Heart right ventricle (tissue), 16 donors: ENCODE measurements at regions of chr22 and their contacts with region 1.

Region 1: DNA sequence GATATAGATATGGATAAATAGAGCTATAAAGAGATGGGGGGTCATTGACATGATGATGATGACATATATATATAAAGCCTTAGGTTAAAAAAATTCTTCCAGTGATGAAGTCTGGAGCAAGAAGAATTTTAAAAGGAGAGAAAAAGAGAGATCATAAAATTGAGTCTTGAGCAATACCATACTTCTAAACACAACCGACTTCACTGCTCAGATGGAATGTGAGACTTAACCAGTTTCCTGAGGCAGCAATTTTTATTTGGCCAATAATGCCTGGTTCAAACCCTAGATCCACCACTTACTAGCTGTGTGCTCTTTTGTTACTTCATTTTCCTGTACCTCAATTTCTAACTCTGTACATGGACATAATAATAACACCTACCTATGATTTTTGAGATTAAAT is 229.5 kb downstream of the TTC28 start:
- DNase-seq: no peak
- ATAC-seq: no peak
- H3K4me3 ChIP-seq: no peak overlapping the region
- H3K27ac ChIP-seq: no peak overlapping the region
- H3K4me1 ChIP-seq: no peaks in the 10 kb centered on the region
- H3K27me3 ChIP-seq: no peaks in the 10 kb centered on the region
- CTCF ChIP-seq: no peak

Region 2: GRCh38 chr22:28582806-28583205 is 132.7 kb after region 1 on chr22:
- intact Hi-C with region 1: loop called in 2 of 10 experiments (anchors 10 kb)
- DNase-seq: no peak
- ATAC-seq: no peak
- H3K4me3 ChIP-seq: no peak overlapping the region
- H3K27ac ChIP-seq: no peak overlapping the region
- H3K4me1 ChIP-seq: peaks cover 0 to 14% (median 0%) of the 10 kb centered on the region in 9 donors
- H3K27me3 ChIP-seq: no peaks in the 10 kb centered on the region
- CTCF ChIP-seq: no peak

Region 3: DNA sequence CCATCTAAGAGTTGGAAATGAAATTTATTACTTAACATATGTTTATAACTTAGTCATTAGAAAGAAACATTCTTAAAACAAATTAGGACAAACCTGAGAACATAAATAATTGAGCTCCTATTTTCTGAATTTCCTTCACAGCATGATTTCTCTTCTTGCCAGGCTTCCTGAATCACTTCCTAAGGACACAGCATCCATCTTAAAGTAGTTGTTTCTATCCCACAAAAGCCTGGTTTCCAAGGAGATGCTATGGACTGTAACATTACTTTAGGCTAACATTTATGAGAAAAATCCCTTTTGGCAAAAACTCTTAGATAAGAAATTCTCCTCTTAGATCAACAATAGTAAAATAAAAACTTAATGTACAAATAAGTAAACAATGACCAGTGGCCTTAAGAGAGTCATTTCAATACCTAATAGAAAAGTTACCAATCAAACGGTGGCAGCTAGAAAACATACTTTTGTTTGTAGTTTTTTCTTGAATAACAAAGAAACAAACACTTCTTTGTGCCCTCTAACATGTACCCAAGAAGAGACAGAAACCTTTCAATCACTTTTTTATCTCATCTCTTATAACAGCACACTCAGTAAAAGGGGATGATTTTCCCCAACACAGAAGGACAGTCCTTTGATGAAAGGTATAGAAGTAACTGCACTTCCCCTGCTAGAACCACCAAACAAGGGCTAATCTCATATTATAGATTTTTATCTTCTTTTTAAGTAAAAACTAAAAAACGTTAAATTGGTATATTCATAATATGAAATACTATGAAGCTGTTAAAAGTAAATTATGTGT is 155.1 kb after region 1 on chr22:
- intact Hi-C with region 1: no loop called
- DNase-seq: no peak
- ATAC-seq: no peak
- H3K4me3 ChIP-seq: no peak overlapping the region
- H3K27ac ChIP-seq: no peak overlapping the region
- H3K4me1 ChIP-seq: peaks cover 0 to 21% (median 2%) of the 10 kb centered on the region in 9 donors
- H3K27me3 ChIP-seq: no peaks in the 10 kb centered on the region
- CTCF ChIP-seq: no peak